ENCODE measurements at regions of chr6 and their contacts with region 1.

Region 1: DNA sequence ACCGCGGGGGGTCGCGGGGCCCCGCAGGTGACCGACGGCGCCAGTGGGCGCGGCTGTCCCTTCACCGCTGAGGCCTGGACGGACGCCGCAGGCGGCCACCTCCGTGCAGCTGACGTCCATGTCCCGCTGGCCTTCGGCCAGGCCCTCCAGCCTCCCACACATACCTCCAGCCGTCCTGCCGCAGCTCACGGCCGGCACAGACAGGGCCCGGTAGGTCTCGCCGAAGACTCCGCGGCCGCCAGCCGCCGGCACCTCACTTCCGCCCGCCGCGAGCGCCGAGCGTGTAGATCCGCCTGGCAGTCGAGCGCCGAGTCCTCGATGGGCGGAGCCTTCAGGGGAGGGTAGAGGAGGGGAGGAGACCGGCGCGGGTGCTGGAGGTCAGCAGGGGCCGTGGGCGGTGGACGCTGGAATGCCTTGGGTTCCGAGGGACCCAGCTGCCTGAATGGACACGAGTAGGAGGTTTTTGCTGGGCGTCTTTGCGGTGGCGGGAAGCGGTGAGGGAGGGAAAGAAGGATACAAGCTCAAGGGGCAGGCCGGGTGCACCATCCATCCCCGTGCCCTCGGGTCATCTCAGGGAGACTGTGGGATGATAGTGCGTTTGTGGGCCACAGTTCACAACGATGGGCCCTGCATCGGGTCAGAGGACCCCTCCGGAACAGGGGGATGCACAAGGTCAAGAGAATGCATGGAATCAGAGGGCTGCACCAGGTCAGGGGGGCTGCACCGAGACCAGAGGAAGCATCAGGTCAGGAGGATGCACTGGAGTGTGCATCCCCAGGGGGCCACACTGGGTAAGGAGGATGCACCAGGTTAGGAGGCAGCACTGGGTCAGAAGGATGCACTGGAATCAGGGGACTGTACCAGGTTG is at the start of gene EXOC2:
- DNase-seq: peak; percentile 89
- ATAC-seq: peak; percentile 79
- H3K4me3 Mint-ChIP-seq: peak within 1 kb of the TSS; percentile 96
- H3K27ac Mint-ChIP-seq: peak within 1 kb of the TSS; percentile 92
- H3K4me1 Mint-ChIP-seq: peaks cover 37% of the 10 kb centered on the region
- H3K27me3 Mint-ChIP-seq: no peaks in the 10 kb centered on the region
- total RNA-seq, gene EXOC2: 34.5 to 34.9 TPM

Region 2: DNA sequence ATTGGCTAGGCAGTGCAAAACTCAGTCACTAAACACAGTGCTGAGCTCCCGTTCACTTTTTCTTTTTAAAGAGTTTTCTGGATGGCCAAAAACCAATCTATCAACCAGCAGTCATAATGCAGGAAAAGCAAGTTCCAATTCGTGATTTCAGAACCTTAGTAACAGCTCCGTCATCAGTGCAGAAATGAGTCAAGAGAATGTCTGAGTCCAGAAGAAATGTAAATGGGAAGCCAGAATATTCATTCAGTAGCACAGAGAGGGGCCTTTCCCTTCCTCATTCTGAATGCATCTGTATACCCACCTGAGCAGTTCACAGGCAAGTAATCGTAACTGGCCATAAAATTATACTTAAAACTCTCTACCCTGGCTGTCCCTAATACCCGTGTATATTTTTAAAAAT is 56.6 kb before region 1 on chr6:
- CTCF ChIA-PET with region 1: no interaction called
- POLR2A ChIA-PET with region 1: no interaction called
- DNase-seq: no peak
- ATAC-seq: no peak
- H3K4me3 Mint-ChIP-seq: no peak overlapping the region
- H3K27ac Mint-ChIP-seq: no peak overlapping the region
- H3K4me1 Mint-ChIP-seq: no peaks in the 10 kb centered on the region
- H3K27me3 Mint-ChIP-seq: no peaks in the 10 kb centered on the region

Region 3: GRCh38 chr6:710601-711571 is 17.8 kb after region 1 on chr6:
- CTCF ChIA-PET with region 1: interaction called, 5 read pairs
- POLR2A ChIA-PET with region 1: interaction called, 26 read pairs
- DNase-seq: peak; percentile 69
- ATAC-seq: peak; percentile 89
- H3K4me3 Mint-ChIP-seq: peak overlapping the region; percentile 92
- H3K27ac Mint-ChIP-seq: peak overlapping the region; percentile 98
- H3K4me1 Mint-ChIP-seq: peaks cover 26% of the 10 kb centered on the region
- H3K27me3 Mint-ChIP-seq: peaks cover 5% of the 10 kb centered on the region